Panc1 (cell line): ENCODE measurements at regions of chr11 and their contacts with region 1.

Region 1: DNA sequence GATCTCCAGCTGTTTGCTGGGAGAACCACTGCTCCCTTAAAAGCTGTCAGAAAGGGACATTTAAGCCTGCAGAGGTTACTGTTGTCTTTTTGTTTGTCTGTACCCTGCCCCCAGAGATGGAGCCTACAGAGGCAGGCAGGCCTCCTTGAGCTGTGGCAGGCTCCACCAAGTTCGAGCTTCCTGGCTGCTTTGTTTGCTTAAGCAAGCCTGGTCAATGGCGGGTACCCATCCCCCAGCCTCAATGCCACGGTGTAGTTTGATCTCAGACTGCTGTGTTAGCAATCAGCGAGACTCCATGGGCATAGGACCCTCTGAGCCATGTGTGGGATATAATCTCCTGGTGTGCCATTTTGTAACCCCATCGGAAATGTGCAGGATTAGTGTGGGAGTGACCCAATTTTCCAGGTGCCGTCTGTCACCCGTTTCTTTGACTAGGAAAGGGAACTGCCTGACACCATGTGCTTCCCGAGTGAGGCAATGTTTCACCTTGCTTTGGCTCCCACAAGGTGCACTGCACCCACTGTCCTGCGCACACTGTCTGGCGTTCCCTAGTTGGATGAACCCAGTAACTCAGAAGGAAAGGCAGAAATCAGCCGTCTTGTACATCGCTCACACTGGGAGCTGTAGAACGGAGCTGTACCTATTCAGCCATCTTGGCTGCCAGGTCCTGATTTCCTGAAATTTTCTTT is 23.5 kb upstream of the TRIM48 start:
- DNase-seq: no peak
- ATAC-seq: no peak
- H3K4me3 ChIP-seq: no peak overlapping the region
- H3K27ac ChIP-seq: no peak overlapping the region
- H3K4me1 ChIP-seq: no peaks in the 10 kb centered on the region
- H3K27me3 ChIP-seq: no peaks in the 10 kb centered on the region
- CTCF ChIP-seq: no peak

Region 2: DNA sequence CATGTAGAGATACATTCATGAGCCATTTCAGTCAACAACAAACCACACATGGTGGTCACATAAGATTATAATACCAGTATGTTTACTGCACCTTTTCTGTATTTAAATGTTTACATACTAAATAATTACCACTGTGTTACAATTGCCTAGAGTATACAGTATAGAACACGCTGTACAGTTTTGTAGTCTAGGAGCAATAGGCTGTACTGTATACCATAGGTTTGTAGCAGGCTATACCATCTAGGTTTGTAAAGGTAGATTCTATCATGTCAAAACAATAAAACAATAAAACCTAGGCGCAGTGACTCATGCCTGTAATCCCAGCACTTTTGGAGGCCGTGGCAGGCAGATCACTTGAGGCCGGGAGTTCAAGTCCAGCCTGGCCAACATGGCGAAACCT is 24.6 kb after region 1 on chr11:
- CTCF ChIA-PET with region 1: no interaction called
- POLR2A ChIA-PET with region 1: no interaction called
- in situ Hi-C with region 1: no loop called
- intact Hi-C with region 1: no loop called
- DNase-seq: no peak
- ATAC-seq: no peak
- H3K4me3 ChIP-seq: no peak overlapping the region
- H3K27ac ChIP-seq: no peak overlapping the region
- H3K4me1 ChIP-seq: no peaks in the 10 kb centered on the region
- H3K27me3 ChIP-seq: no peaks in the 10 kb centered on the region
- CTCF ChIP-seq: no peak

Region 3: GRCh38 chr11:55324500-55324899 is 86.0 kb after region 1 on chr11:
- CTCF ChIA-PET with region 1: no interaction called
- POLR2A ChIA-PET with region 1: no interaction called
- in situ Hi-C with region 1: no loop called
- intact Hi-C with region 1: no loop called
- DNase-seq: no peak
- ATAC-seq: no peak
- H3K4me3 ChIP-seq: no peak overlapping the region
- H3K27ac ChIP-seq: no peak overlapping the region
- H3K4me1 ChIP-seq: no peaks in the 10 kb centered on the region
- H3K27me3 ChIP-seq: no peaks in the 10 kb centered on the region
- CTCF ChIP-seq: no peak

Region 4: DNA sequence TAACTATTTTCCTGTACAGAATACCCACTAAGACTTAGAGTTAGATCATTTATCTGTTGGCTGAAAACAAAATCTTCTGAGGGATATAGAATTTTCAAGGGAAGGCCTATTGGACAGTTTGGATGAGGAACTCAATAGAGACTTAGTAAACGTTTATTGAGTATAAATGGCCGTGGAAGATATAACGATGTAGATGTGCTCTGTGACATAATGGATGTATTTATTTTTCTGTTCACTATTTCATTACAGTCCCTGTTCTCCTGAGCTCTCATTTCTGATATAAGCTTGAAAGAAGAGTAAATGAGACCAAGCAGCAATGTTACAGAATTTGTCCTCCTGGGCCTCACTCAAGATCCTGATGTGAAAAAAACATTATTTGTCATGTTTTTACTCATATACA is 104.4 kb after region 1 on chr11 and contains the start of gene OR4A16:
- CTCF ChIA-PET with region 1: no interaction called
- POLR2A ChIA-PET with region 1: no interaction called
- in situ Hi-C with region 1: no loop called
- intact Hi-C with region 1: loop called (anchors 10 kb)
- DNase-seq: no peak
- ATAC-seq: no peak
- H3K4me3 ChIP-seq: no peak within 1 kb of the TSS
- H3K27ac ChIP-seq: no peak within 1 kb of the TSS
- H3K4me1 ChIP-seq: no peaks in the 10 kb centered on the region
- H3K27me3 ChIP-seq: no peaks in the 10 kb centered on the region
- CTCF ChIP-seq: no peak
- total RNA-seq, gene OR4A16: not detected

Region 5: GRCh38 chr11:55669376-55669775 is 430.9 kb after region 1 on chr11:
- CTCF ChIA-PET with region 1: no interaction called
- POLR2A ChIA-PET with region 1: no interaction called
- in situ Hi-C with region 1: no loop called
- intact Hi-C with region 1: no loop called
- DNase-seq: no peak
- ATAC-seq: no peak
- H3K4me3 ChIP-seq: no peak overlapping the region
- H3K27ac ChIP-seq: no peak overlapping the region
- H3K4me1 ChIP-seq: no peaks in the 10 kb centered on the region
- H3K27me3 ChIP-seq: no peaks in the 10 kb centered on the region
- CTCF ChIP-seq: no peak

Region 6: DNA sequence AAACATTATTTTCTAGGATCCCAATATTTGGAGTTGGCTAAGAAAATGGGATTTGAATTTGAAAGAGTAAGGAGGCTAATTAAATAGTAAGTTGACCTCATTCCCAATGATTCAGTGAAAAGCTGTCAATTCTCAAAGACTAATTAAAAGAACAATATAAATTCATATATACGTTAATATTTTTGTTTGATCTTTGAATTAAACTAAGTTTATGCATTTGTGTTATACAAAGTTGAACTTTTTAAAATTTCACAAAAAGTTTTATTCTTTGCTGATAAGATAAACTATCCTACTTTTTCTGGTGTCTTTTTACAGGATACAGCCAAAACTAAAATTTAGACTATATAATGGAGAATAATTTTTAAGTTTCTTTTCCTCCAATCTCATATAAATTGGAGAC is 572.6 kb after region 1 on chr11 and contains the start of gene OR5L1:
- CTCF ChIA-PET with region 1: no interaction called
- POLR2A ChIA-PET with region 1: no interaction called
- in situ Hi-C with region 1: no loop called
- intact Hi-C with region 1: no loop called
- DNase-seq: no peak
- ATAC-seq: no peak
- H3K4me3 ChIP-seq: no peak within 1 kb of the TSS
- H3K27ac ChIP-seq: no peak within 1 kb of the TSS
- H3K4me1 ChIP-seq: no peaks in the 10 kb centered on the region
- H3K27me3 ChIP-seq: no peaks in the 10 kb centered on the region
- CTCF ChIP-seq: no peak
- total RNA-seq, gene OR5L1: not detected